Gastrocnemius medialis (tissue), 4 donors: ENCODE measurements at regions of chr10 and their contacts with region 1.

Region 1: DNA sequence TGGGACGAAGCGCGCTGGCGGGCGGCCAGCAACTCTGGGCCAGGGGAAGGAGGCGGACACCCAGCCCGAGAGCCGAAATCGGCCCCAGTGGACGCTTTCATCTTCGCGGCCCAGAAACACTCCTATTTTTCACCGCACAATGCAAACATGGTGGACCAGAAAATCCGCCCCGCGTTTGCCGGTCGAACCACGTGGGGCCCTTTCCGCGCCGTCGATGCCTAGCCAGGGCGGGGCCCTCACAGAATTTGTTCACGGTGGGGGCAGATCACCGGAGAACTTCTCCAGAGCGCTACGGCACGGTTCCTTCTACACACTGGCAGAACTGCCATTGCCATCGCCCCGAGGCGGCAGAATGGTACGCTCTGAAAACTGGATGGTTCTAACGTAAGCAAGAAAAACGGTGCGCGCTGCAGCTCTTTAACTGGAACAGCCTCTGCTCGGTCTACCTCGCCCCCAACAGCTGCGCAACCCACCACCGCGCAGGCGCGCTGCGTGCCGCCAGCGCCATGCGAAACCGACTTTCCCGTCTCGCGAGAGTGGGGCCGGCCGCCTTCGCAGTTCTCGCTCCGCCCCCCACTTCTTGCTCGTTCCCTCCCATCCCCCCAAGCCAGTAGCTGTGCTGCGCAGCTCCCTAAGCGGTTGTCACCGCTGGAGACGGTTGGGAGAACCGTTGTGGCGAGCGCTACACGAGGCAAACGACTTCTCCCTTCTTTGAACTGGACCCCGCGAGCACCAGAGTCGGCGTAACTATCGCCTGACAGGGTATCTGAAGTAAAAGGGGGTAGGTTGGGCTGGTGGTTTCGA is at the start of gene HNRNPH3:
- DNase-seq: peak; percentile 98
- ATAC-seq: peak; percentile 81 to 83
- H3K4me3 ChIP-seq: peak within 1 kb of the TSS; percentile 94 to 98 (median 97)
- H3K27ac ChIP-seq: peak within 1 kb of the TSS; percentile 99 to 100 (median 100)
- H3K4me1 ChIP-seq: peaks cover 44 to 51% of the 10 kb centered on the region in 2 donors
- H3K27me3 ChIP-seq: no peaks in the 10 kb centered on the region
- CTCF ChIP-seq: peak in 3 of 5 experiments; percentile 6 to 17 (median 8)
- POLR2A ChIP-seq: peak; percentile 100
- total RNA-seq, gene HNRNPH3: 19.7 to 51.6 (median 25.8) TPM

Region 2: GRCh38 chr10:67849331-67850011 is 482.2 kb before region 1 on chr10:
- in situ Hi-C with region 1: no loop called
- intact Hi-C with region 1: loop called (anchors 10 kb)
- DNase-seq: peak; percentile 90 to 95
- ATAC-seq: peak; percentile 98 to 100
- H3K4me3 ChIP-seq: peak overlapping the region; percentile 62 to 84 (median 76)
- H3K27ac ChIP-seq: peak overlapping the region; percentile 92 to 98 (median 92)
- H3K4me1 ChIP-seq: peaks cover 0 to 6% of the 10 kb centered on the region in 2 donors
- H3K27me3 ChIP-seq: no peaks in the 10 kb centered on the region
- CTCF ChIP-seq: peak in 3 of 5 experiments; percentile 15 to 46 (median 32)
- POLR2A ChIP-seq: peak; percentile 52 to 54

Region 3: DNA sequence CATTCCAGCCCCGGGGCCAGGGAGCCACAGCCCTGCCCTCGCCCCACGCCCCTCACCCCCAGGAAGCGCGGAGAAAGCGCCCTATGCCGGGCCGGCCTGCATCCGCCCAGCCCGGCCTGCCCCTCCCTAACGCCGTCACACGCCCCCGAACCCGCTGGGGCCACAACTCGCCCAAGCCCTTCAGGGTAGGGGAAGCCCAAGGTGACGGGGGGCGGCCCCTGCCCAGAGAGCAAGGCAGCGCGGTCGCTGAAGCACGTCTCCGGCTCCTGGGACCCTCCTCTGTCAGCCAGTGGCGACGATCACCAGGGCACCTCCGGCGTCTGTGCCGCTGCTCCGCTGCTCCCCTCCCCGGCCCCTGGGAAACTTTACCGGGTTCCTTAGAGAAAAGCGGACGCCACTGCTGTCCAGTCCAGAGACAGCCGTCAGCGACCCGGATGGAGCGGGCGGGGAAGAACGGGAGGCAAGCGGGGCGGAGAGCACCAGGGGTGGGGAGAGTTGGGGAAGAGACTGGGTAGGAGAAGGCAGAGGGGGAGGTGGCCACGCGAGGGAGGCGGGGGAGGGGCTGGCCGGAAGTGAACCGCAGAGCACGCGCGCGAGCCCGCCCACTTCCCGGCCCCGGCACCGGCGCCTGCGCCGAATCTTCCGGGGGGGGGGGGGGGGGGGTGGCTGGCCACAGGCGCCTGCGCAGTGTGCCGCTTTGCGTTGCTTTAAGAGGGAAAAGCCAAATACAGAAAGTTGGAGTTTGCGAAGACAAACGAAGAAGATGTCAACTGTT is 256.7 kb before region 1 on chr10 and contains the start of gene HERC4:
- in situ Hi-C with region 1: loop called in 3 of 4 experiments (anchors 10 to 25 kb)
- intact Hi-C with region 1: loop called (anchors 2 kb)
- DNase-seq: peak; percentile 94
- ATAC-seq: peak; percentile 92 to 96
- H3K4me3 ChIP-seq: peak within 1 kb of the TSS; percentile 87 to 100 (median 96)
- H3K27ac ChIP-seq: peak within 1 kb of the TSS; percentile 94 to 99 (median 99)
- H3K4me1 ChIP-seq: peaks cover 32 to 42% of the 10 kb centered on the region in 2 donors
- H3K27me3 ChIP-seq: no peaks in the 10 kb centered on the region
- CTCF ChIP-seq: peak in 1 of 5 experiments; percentile 4
- POLR2A ChIP-seq: peak; percentile 88 to 90
- total RNA-seq, gene HERC4: 12.8 to 25.2 (median 13.1) TPM

Region 4: GRCh38 chr10:68223535-68224165 is 108.0 kb before region 1 on chr10:
- in situ Hi-C with region 1: no loop called
- intact Hi-C with region 1: no loop called
- DNase-seq: no peak
- ATAC-seq: no peak
- H3K4me3 ChIP-seq: no peak overlapping the region
- H3K27ac ChIP-seq: no peak overlapping the region
- H3K4me1 ChIP-seq: no peaks in the 10 kb centered on the region
- H3K27me3 ChIP-seq: no peaks in the 10 kb centered on the region
- CTCF ChIP-seq: no peak
- POLR2A ChIP-seq: no peak

Region 5: DNA sequence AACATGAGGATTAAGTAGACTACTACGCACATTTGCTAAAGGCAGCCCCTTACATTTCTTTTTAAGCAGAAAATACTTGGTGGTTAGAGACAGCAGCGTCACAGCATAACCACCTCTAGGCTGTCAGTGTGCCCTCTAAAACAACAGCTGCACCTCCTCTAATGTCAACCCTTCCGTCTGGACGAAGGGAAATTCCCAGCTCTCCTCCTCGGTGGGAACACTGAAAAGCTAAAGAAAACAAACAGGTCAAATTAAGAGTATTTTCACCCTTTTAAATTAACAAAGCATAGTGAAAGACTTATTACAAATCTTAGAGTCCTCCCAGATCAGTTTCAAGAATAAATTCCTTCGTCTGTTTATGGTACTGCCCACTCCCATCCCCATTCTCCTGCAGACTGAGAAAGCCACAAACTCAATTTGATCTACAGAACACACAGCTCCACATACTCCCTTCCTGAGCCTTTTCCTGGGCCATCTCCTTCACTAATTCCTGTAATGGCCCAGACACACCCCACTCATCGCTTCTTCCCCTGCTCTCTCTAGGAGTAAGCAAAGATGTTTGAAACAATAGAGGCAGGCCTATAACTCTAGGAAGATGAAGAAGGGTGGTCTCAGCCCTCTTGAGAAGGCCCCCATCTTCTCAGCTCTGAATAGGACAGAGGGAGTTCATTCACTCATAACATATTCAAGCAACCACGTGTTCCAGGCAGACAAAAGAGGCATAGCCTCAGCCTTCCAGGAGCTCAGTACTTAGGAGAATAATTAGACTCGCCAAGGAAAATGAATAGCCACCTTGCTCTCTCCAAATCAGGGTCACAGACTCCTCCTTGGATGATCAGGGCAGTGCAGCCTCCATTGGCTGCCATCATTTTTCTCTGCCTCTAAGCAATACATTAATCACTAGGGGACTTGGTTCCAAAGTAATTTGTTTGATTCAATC is 47.3 kb before region 1 on chr10:
- in situ Hi-C with region 1: no loop called
- intact Hi-C with region 1: no loop called
- DNase-seq: no peak
- ATAC-seq: no peak
- H3K4me3 ChIP-seq: no peak overlapping the region
- H3K27ac ChIP-seq: no peak overlapping the region
- H3K4me1 ChIP-seq: no peaks in the 10 kb centered on the region
- H3K27me3 ChIP-seq: no peaks in the 10 kb centered on the region
- CTCF ChIP-seq: no peak
- POLR2A ChIP-seq: no peak

Region 6: GRCh38 chr10:68406815-68407548 is 75.3 kb after region 1 on chr10 and contains the start of gene RUFY2:
- in situ Hi-C with region 1: no loop called
- intact Hi-C with region 1: loop called (anchors 5 kb)
- DNase-seq: peak; percentile 32 to 58
- ATAC-seq: peak; percentile 92 to 96
- H3K4me3 ChIP-seq: peak within 1 kb of the TSS; percentile 83 to 100 (median 96)
- H3K27ac ChIP-seq: peak within 1 kb of the TSS; percentile 87 to 95 (median 92)
- H3K4me1 ChIP-seq: peaks cover 3 to 11% of the 10 kb centered on the region in 2 donors
- H3K27me3 ChIP-seq: no peaks in the 10 kb centered on the region
- CTCF ChIP-seq: peak; percentile 45 to 99 (median 95)
- POLR2A ChIP-seq: peak; percentile 60 to 69
- total RNA-seq, gene RUFY2: 8.9 to 15.7 (median 11.7) TPM

Region 7: DNA sequence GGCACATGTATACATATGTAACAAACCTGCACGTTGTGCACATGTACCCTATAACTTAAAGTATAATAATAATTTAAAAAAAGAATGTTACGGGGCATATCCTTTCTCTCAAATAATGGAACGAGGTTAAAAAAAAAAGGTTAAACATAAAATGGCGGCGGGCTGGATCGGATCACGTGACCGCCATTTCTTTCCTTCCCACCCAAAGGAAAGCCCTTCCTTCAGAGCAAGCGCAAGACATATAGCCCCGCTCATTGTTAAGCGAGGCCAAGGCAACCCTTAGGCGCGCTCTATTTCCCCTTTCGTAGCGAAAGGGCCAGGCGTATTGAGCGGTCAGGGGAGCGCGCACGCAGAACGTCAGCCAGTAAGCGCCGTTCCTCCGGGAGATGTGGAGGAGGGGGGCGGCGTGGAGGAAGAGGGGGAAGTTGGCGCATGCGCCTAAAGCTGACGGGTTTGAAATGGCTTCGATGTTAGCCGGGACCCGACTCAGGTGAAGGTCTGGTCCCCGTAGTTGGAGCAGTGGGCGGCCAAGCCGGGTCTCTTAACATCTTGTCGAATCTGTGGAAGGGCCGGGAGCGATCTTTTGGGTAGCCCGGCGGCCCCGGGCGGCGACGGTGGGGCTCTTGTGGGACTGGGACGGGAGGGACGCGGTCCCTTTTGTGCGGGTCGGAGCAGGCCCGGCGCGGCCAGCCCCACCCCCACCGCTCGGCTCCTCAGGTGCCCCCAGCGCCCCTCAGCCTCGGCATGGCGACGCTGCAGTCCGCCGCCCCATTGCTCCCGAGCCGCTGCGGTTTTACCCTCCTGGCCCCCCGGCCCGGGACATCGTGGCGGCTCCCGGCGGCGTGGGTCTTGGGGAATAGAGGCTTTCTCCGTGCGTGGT is 389.4 kb after region 1 on chr10 and contains the start of gene CCAR1:
- in situ Hi-C with region 1: no loop called
- intact Hi-C with region 1: loop called (anchors 5 kb)
- DNase-seq: peak; percentile 93 to 95
- ATAC-seq: peak; percentile 97 to 98
- H3K4me3 ChIP-seq: peak within 1 kb of the TSS; percentile 88 to 96 (median 90)
- H3K27ac ChIP-seq: peak within 1 kb of the TSS; percentile 94 to 99 (median 96)
- H3K4me1 ChIP-seq: peaks cover 7 to 9% of the 10 kb centered on the region in 2 donors
- H3K27me3 ChIP-seq: no peaks in the 10 kb centered on the region
- CTCF ChIP-seq: no peak
- POLR2A ChIP-seq: peak; percentile 67 to 73
- total RNA-seq, gene CCAR1: 17.8 to 71.3 (median 37.7) TPM